ENCODE measurements at regions of chr2 and their contacts with region 1.

Region 1: DNA sequence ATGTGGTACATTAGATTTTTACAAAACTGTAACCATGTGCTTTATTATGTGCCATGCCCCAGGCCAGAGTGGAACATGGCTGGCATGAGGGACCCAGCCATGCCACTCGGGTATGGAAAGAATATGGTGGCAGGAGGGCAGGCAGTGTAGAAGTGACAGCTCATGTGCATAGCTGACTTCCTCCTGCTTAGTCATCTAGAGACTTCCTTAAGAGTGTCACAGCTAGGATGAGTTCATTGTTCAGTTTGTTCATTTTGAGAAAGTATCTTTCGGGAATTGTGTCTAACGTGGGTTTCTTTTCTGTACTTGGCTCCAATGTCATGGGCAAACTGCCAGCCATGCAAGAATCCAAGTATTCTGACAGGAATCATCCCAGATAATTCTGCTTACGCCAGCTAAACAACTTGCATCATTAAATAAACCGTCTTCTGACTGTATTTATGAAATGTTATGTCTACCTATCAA is 94.3 kb upstream of the ITGB6 start:
- DNase-seq: no peak
- H3K4me3 ChIP-seq: no peak overlapping the region
- H3K4me3 Mint-ChIP-seq: no peak overlapping the region
- H3K27ac ChIP-seq: no peak overlapping the region
- H3K27ac Mint-ChIP-seq: peak overlapping the region in 5 of 7 donors; percentile 1 to 57 (median 27)
- H3K4me1 ChIP-seq: peaks cover 36% of the 10 kb centered on the region
- H3K4me1 Mint-ChIP-seq: peaks cover 50 to 81% (median 60%) of the 10 kb centered on the region in 4 donors
- H3K27me3 ChIP-seq: no peaks in the 10 kb centered on the region
- H3K27me3 Mint-ChIP-seq: no peaks in the 10 kb centered on the region

Region 2: DNA sequence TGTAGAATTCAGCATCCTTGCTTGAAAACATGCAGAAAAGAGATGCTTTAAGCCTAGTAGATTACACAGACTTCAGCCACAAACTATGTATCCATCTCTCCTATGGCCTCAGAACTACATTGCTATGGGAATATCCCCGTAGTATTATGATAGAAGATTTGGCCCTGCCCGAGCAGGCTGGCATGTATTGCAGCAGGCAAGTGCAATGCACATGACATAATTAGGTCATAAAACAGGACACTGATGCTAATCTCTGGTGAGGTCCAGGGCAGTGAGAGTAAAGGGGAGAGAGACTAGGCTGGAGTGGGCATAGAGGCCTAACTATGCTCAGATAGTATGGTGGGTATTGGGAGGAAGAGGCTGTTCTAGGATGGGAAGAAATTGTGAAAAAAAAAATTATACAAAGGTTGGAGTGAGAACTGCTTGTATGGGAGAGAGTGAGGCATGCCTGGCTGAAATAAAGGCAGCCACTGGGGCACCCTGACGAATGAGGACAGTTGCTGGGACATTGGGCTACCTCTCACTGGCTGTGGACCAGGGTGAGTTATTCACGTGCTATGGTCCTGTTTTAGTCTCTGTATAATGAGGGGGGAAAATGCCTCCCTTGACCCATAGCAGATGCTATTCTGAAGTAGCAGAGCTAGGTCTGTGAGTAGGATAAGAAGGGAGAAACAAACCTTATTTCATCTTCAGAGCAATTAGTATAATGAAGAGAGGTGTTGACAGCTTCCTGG is 230.3 kb before region 1 on chr2:
- CTCF ChIA-PET with region 1: no interaction called
- POLR2A ChIA-PET with region 1: no interaction called
- intact Hi-C with region 1: no loop called
- DNase-seq: no peak
- H3K4me3 ChIP-seq: no peak overlapping the region
- H3K4me3 Mint-ChIP-seq: no peak overlapping the region
- H3K27ac ChIP-seq: no peak overlapping the region
- H3K27ac Mint-ChIP-seq: no peak overlapping the region
- H3K4me1 ChIP-seq: peaks cover 5% of the 10 kb centered on the region
- H3K4me1 Mint-ChIP-seq: peaks cover 0 to 4% (median 2%) of the 10 kb centered on the region in 4 donors
- H3K27me3 ChIP-seq: peaks cover 7% of the 10 kb centered on the region
- H3K27me3 Mint-ChIP-seq: peaks cover 40 to 42% of the 10 kb centered on the region in 2 donors

Region 3: DNA sequence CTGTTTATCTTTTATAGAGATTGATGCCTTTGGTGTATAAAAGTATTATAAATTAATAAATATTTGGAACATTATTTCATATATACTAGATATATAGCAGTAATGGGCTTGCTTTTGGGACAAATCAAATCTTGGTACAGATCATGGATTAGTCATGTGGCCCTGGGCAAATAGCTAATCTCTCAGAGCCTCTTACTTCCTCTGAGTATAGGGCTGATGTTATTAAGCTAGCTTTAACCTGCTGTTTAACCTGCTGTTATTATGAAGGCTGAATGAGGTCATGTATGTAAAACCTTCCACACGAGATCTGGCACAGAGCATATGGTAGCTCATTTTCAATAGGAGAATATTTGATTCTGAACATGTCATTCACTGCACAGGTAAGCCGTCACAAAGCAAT is 100.0 kb before region 1 on chr2:
- CTCF ChIA-PET with region 1: no interaction called
- POLR2A ChIA-PET with region 1: no interaction called
- intact Hi-C with region 1: no loop called
- DNase-seq: no peak
- H3K4me3 ChIP-seq: no peak overlapping the region
- H3K4me3 Mint-ChIP-seq: no peak overlapping the region
- H3K27ac ChIP-seq: no peak overlapping the region
- H3K27ac Mint-ChIP-seq: no peak overlapping the region
- H3K4me1 ChIP-seq: no peaks in the 10 kb centered on the region
- H3K4me1 Mint-ChIP-seq: peaks cover 0 to 7% (median 1%) of the 10 kb centered on the region in 4 donors
- H3K27me3 ChIP-seq: no peaks in the 10 kb centered on the region
- H3K27me3 Mint-ChIP-seq: peaks cover 0 to 4% of the 10 kb centered on the region in 2 donors

Region 4: DNA sequence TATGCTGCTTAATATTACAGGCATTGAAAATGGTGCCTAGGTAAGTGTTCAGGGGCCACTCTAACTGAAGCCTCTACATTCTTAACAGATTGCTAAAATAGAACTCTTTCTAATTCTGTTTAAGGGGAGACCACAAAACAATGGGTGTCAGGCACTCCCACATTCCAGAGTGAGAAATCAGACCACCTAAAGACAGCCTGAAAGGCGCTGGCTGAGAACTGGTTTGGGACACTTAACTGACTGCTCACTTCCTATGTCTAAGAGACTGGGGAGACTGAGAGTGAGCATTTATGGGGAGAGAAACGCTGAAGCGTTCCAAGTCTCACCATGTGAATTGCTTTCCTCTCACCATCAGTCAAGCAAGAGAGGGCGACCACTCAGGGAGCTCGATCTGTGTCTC is 14.5 kb after region 1 on chr2:
- CTCF ChIA-PET with region 1: no interaction called
- POLR2A ChIA-PET with region 1: no interaction called
- intact Hi-C with region 1: loop called (anchors 2 kb)
- DNase-seq: no peak
- H3K4me3 ChIP-seq: no peak overlapping the region
- H3K4me3 Mint-ChIP-seq: no peak overlapping the region
- H3K27ac ChIP-seq: no peak overlapping the region
- H3K27ac Mint-ChIP-seq: peak overlapping the region in 2 of 7 donors; percentile 54 to 88
- H3K4me1 ChIP-seq: no peaks in the 10 kb centered on the region
- H3K4me1 Mint-ChIP-seq: peaks cover 5 to 32% (median 22%) of the 10 kb centered on the region in 4 donors
- H3K27me3 ChIP-seq: no peaks in the 10 kb centered on the region
- H3K27me3 Mint-ChIP-seq: no peaks in the 10 kb centered on the region